GM13976 (cell line): ENCODE measurements at regions of chr17 and their contacts with region 1.

Region 1: GRCh38 chr17:20315821-20316220 is 151.5 kb downstream of the LGALS9B start:
- DNase-seq: no peak
- CTCF ChIP-seq: no peak

Region 2: DNA sequence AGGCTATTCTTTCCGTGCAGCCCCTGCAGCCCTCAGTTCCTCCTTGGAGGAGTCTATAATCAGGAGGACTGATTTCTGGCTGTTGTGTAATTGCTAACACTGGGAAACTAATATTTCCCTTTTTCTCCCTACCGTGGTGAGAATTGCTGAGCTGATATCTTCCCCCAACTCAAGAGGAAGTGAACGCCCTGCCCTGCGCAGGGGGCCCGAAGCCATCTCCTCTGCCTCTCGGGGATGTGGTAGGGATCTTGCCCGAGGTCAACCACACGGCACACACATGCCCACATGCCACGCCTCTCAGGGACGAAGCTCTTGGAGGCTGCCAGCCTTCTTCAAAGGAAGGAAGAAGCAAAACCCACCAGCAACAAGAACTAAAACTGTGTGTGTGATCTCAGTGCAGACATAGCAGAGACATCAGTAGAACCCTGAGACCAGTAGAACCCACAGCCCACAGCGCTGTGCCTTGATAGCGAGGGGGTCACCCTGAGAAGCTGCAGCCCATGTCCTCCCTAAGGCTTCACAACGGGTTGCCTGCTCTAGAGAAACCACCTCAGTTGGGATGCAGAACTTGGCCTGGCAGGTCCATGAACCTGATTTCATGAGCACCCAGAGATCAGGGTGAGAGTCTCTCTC is 439.2 kb before region 1 on chr17:
- in situ Hi-C with region 1: no loop called
- DNase-seq: no peak
- CTCF ChIP-seq: no peak

Region 3: GRCh38 chr17:19928299-19928698 is 387.5 kb before region 1 on chr17:
- in situ Hi-C with region 1: no loop called
- DNase-seq: no peak
- CTCF ChIP-seq: no peak

Region 4: DNA sequence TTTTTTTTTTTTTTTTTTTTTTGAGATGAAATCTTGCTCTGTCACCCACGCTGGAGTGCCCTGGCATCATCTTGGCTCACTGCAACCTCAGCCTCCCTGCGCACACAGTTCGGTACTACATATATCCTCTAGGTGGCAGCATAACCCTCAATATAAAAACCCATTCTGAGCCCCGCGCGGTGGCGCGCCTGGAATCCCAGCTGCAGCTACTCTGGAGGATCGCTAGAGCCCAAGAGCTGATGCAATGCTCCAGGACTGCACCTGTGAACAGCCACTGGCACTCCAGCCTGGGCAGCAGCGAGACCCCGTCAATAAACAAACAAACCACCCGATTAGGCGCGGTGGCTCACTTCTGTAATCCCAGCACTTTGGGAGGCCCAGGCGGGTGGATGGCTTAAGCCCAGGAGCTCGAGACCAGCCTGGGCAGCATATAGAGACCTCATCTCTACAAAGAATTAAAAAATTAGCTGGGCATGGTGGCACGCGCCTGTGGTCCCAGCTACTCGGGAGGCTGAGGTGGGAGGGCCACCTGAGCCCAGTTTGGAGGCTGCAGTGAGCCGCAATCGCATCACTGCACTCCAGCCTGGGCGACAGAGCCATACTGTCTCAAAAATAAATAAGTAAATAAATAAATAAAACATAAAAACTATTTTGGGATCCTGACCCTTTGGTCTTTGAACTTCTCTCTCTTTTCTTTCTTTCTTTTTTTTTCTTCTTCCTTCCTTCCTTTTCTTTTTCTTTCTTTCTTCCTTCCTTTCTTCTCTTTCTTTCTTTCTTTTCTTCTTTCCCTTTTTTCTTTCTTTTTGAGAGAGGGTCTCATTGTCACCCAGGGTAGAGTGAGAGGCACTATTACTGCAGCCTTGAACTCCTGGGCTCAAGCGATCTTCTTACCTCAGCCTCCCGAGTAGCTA is 322.8 kb before region 1 on chr17:
- in situ Hi-C with region 1: loop called (anchors 10 kb)
- DNase-seq: peak; percentile 76
- CTCF ChIP-seq: peak; percentile 64

Region 5: DNA sequence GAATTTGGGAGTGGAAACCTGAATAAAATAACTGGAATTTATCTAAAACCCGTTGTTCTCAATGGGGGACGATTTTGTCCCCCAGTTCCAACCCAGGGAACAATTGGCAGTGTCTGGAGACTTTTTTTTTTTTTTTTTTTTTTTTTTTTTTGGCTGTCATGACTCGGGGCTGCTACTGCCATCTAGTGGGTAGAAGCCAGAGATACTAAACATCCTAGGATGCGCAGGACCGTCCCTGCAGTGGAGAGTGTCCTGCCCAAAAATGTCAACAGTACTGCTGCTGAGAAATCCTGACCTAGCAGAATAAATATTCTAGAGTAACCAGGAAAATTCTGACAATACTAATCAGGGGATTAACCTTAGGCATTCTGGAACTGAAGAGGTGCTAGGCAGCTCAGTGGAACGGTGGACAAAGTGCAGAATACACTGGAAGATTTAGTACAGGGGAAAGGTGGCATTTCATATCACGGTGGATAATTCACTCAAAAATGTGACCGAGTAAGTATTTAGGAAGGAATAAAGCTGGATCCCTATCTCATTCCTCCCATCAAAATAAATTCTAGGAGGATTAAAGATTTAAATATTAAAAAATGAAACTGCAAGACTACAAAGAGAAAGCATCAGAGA is 199.0 kb before region 1 on chr17:
- in situ Hi-C with region 1: loop called (anchors 10 kb)
- DNase-seq: peak; percentile 58
- CTCF ChIP-seq: peak; percentile 50

Region 6: GRCh38 chr17:20226814-20227482 is 88.9 kb before region 1 on chr17:
- in situ Hi-C with region 1: loop called (anchors 10 kb)
- DNase-seq: peak; percentile 70
- CTCF ChIP-seq: peak; percentile 76